Cardiac septum (tissue), 1 donor: ENCODE measurements at regions of chr9 and their contacts with region 1.

Region 1: DNA sequence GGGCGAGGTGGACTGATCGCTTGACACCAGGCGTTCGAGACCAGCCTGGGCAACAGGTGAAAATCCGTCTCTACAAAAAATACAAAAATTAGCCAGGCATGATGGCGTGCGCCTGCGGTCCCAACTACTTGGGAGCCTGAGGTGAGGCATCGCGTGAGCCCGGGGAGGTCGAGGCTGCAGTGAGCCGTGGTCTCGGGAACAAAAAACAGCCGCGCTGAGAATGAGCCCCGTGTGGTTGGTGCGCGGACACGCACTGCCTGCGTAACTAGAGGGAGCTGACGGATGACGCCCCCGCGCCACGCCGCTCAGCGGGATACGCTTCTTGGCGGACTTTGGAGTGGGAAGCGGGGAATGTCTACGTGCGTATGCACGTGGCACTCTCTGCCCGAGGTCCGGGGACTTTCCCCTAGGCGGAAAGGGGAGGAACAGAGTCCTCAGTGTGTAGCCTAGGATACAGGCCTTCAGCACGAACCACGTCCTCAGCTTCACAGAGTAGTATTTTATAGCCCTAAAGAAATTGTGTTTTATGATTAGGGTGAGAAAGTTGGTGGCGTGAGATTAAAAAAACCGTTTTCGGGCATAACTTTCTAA is at the start of gene RMRP:
- DNase-seq: peak; percentile 96
- total RNA-seq, gene RMRP: 10,677 TPM

Region 2: DNA sequence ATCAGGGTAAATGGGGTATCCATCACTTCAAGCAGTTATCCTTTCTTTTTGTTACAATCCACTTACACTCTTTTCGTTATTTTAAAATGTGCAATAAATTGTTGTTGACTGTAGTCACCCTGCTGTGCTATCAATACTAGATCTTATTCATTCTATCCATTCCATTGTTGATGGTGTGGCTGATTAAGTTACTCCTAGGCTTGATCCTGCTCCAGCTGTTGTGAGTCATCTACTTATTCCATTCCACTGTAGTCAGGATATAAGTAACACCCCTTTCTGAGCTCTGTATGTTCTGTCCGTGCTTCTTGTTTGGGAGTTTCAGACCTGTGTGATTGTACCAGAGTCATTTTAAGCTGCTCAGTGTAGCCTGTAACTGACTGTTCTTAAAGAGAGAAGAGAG is 290.2 kb before region 1 on chr9:
- intact Hi-C with region 1: no loop called
- DNase-seq: no peak

Region 3: GRCh38 chr9:35690431-35691333 is 33.0 kb after region 1 on chr9:
- intact Hi-C with region 1: loop called (anchors 2 kb)
- DNase-seq: peak; percentile 88

Region 4: GRCh38 chr9:35814841-35815543 is 157.4 kb after region 1 on chr9 and contains the start of gene HINT2:
- intact Hi-C with region 1: loop called (anchors 5 kb)
- DNase-seq: peak; percentile 96
- total RNA-seq, gene HINT2: 57.6 TPM